AG04450 (cell line): ENCODE measurements at regions of chr5 and their contacts with region 1.

Region 1: GRCh38 chr5:171640480-171640879 is 145.1 kb upstream of the SMIM23 start:
- DNase-seq: no peak
- H3K4me3 ChIP-seq: no peak overlapping the region
- H3K27ac ChIP-seq: peak overlapping the region; percentile 35
- H3K27me3 ChIP-seq: peaks cover 3% of the 10 kb centered on the region
- CTCF ChIP-seq: no peak

Region 2: GRCh38 chr5:171630027-171630669 is 10.3 kb before region 1 on chr5:
- CTCF ChIA-PET with region 1: interaction called, 13 read pairs
- POLR2A ChIA-PET with region 1: no interaction called
- DNase-seq: peak; percentile 11
- H3K4me3 ChIP-seq: peak overlapping the region; percentile 33
- H3K27ac ChIP-seq: no peak overlapping the region
- H3K27me3 ChIP-seq: peaks cover 41% of the 10 kb centered on the region
- CTCF ChIP-seq: peak; percentile 69